ENCODE measurements at regions of chr11 and their contacts with region 1.

Region 1: DNA sequence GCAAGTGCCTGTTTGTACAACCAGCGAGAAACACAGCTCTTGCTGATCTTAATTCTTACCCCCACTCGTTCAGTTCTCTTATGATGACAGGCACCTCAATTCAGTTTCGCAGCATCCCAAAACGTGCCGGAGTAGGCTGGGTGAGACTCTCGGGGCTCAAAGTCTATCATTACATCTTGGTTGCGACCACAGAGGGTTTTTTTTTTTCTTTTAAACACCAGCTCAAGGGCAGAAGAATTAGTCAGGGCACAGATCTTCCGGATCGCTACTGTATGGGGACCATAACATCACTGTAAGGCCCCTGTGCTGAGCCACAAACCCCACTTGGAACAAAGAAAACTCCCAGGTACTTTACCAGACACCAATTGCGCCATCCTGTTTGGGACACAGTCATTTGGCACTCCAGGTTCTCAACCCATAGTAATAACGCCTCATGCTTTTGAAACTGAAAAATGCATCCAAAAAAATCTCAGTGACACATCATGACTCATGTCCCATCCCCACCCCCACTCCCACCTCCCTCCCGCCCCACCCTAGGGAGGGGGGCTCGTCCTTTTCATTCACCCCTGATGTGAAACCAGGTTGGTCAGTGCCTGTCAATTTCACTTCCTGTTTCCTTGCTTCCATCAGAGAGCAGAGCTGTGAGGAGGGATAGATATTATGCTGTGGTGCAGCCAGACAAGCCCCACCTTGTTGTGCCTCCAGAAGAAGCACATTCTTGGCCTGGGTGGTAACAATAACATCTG is 41.0 kb upstream of the CD5 start:
- DNase-seq: peak; percentile 76
- H3K4me3 Mint-ChIP-seq: peak overlapping the region; percentile 70
- H3K27ac Mint-ChIP-seq: peak overlapping the region; percentile 88
- H3K4me1 Mint-ChIP-seq: peaks cover 77% of the 10 kb centered on the region
- H3K27me3 Mint-ChIP-seq: no peaks in the 10 kb centered on the region

Region 2: GRCh38 chr11:60985991-60986915 is 75.0 kb before region 1 on chr11:
- intact Hi-C with region 1: loop called (anchors 1 kb)
- DNase-seq: peak; percentile 81
- H3K4me3 Mint-ChIP-seq: peak overlapping the region; percentile 80
- H3K27ac Mint-ChIP-seq: peak overlapping the region; percentile 92
- H3K4me1 Mint-ChIP-seq: peaks cover 94% of the 10 kb centered on the region
- H3K27me3 Mint-ChIP-seq: no peaks in the 10 kb centered on the region

Region 3: GRCh38 chr11:61028272-61028761 is 32.9 kb before region 1 on chr11:
- intact Hi-C with region 1: loop called (anchors 1 kb)
- DNase-seq: no peak
- H3K4me3 Mint-ChIP-seq: peak overlapping the region; percentile 91
- H3K27ac Mint-ChIP-seq: peak overlapping the region; percentile 100
- H3K4me1 Mint-ChIP-seq: peaks cover 87% of the 10 kb centered on the region
- H3K27me3 Mint-ChIP-seq: no peaks in the 10 kb centered on the region

Region 4: DNA sequence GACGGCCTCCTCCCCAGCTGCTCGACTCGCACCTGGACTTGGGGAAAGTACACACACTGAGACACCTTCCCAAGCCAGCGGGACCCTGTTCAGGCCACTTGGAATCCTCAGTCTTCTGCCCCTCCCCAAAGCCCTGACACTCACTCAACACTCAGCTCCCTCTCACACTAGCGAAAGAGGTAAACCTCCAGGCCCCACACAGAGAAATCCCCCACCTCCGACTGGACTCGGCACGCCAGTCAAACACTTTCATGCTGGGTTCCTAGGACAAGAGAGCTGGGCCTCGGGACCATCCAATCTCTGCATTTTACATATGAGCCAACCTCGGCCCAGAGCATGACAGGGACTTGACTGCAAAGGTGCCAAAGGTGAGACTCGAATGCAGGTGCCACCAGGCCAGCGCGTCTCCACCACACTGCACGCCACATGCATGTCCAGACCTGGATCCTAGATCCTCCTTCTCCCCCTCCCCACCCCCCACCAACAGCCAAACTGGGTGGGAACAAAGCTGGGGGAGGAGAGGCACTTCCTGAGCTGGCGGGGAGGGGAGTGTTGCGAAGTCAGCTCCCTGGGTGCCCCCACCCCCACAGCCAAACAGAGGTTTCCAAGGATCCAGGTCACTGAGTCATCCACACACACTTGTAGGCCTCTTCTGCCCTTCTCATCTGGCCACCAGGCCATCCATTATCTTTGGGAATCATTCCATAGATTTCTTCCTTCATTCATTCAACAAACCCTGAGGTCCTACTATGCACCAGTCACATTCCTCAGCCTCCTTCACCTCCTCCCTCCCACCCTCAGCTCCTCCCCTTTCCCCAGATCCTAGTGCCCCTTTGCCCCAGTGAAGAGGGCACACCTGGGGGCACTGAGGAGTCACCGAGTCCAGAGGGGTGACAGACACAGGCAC is 30.4 kb after region 1 on chr11:
- intact Hi-C with region 1: loop called (anchors 1 kb)
- DNase-seq: peak; percentile 41
- H3K4me3 Mint-ChIP-seq: peak overlapping the region; percentile 96
- H3K27ac Mint-ChIP-seq: peak overlapping the region; percentile 98
- H3K4me1 Mint-ChIP-seq: peaks cover 77% of the 10 kb centered on the region
- H3K27me3 Mint-ChIP-seq: no peaks in the 10 kb centered on the region

Region 5: DNA sequence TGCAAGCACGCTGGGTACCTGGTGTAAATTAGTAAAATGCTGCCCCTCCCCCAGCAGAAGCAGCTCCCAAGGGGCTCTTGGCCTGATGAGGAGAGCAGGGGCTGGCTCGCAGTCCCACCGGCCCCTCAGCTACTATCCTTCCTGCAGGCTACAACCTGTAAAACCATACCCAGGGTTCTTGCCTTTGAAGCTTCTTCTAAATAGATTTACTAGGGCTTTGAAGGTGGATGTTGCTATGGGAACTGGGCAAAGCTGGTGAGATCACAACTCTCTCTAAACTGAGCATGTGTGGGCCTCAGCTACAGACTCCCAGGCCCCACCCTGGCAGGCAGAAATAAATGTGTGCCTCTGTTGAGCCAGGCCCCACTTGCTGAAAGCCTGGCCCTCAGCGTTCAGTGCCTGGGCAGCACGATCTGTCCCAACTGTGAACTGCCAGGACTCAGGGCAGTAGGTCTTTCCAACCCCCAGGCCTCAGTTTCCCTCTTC is 59.5 kb after region 1 on chr11:
- intact Hi-C with region 1: loop called (anchors 1 kb)
- DNase-seq: no peak
- H3K4me3 Mint-ChIP-seq: peak overlapping the region; percentile 17
- H3K27ac Mint-ChIP-seq: peak overlapping the region; percentile 57
- H3K4me1 Mint-ChIP-seq: peaks cover 54% of the 10 kb centered on the region
- H3K27me3 Mint-ChIP-seq: no peaks in the 10 kb centered on the region

Region 6: DNA sequence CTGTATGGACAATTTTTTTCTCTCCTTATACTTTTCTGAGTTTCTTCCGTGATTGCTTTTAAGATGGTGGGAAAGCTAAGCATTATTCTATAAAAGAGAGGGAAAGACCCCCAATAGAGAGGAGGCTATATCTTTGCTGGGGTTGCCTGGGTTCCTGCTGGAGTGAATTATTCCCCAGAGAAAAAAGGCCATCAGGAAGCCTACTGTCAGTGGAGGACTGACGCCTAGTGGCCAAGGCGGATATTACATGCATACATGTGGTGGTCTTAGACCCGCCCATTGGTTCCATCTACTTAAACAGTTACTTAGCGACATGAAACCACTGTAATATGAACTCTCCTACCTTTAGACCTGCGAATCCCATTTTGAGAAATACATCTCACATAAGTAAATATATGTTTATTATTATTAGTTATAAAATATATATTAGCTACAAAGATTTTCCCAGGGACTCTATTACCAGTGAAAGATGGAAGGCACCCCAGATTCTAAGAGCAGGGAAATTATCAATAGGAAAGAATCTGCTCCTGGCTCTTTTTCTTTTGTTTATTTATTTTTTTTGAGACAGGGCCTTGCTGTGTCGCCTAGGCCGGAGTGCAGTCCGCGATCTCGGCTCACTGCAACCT is 126.4 kb after region 1 on chr11:
- intact Hi-C with region 1: loop called (anchors 5 kb)
- DNase-seq: peak; percentile 64
- H3K4me3 Mint-ChIP-seq: no peak overlapping the region
- H3K27ac Mint-ChIP-seq: no peak overlapping the region
- H3K4me1 Mint-ChIP-seq: no peaks in the 10 kb centered on the region
- H3K27me3 Mint-ChIP-seq: peaks cover 14% of the 10 kb centered on the region

Measured in activated T-helper 1 cell treated with anti-CD3 and anti-CD28 coated beads, Interleukin-12 subunit alpha, Interleukin-12 subunit beta, Interleukin-2, Interleukin-4 antibody, amounts not matched to agents 30 ng/mL and 10 ng/mL and 1 ng/mL, durations not matched to agents 14 hours and 24 hours and 36 hours (primary cell).